Panc1 (cell line): ENCODE measurements at regions of chr1 and their contacts with region 1.

Region 1: DNA sequence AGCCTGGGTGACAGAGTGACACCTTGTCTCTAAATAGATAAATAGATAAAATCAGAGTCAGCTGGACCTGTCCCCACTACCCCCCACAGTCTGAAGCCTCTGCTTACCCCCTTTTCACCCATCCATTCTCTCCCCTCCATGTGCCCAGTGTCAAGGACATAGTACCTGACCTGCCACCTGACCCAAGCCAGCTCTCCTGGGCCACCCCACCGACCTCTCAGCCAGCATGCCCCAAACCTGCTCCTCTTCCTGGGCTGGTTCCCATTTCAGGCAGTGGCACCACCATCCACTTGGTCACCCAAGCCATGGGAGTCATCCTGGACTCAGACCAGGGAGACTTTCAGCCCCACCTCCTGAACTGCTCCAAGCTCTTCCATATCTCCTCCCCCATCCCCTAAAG is 28.2 kb downstream of the CITED4 start:
- DNase-seq: no peak
- ATAC-seq: no peak
- H3K4me3 ChIP-seq: no peak overlapping the region
- H3K27ac ChIP-seq: no peak overlapping the region
- H3K4me1 ChIP-seq: no peaks in the 10 kb centered on the region
- H3K27me3 ChIP-seq: no peaks in the 10 kb centered on the region
- CTCF ChIP-seq: no peak

Region 2: DNA sequence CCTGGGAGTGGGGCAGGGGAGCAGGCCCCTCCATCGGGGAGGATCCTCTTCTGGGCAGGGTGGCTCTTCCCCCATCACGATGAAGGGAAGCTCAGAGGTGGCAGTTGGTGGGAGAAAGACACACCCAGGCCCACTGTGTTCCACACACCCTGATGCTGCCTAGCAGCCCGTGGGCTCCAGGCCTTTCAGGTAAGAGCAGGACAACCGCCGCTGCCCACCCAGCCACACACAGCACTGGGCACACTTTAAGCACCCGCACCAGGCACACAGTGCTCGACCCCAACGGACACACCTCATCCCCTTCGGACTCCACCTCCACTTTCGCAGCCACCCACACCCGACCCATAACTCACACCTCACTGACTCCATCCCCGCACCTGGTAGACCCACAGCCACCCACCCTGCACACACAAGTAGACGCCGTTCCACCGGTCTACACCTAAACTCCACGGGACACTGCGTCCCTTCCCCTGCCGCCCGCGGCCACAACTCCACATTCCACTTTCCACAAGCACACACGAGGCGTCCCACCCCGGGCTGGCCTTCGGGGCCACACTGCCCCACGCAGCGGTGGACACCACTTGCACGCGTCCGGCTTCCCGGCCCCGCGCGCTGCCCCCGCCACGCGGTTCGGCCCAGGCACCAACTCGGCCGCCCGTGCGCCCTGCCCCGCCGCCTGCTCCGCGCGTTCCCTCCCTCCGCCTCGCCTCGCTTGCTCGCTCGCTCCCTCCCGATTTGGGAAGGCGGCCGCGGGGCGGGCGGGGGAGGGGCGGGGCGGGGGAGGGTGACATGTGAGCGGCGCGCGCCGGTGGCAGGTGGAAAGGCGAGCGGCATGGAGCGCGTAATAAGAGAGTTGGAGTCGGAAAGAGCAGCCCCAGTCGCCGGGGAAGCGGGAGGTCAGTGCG is 50.7 kb before region 1 on chr1 and contains the start of gene KCNQ4:
- CTCF ChIA-PET with region 1: no interaction called
- POLR2A ChIA-PET with region 1: no interaction called
- in situ Hi-C with region 1: no loop called
- intact Hi-C with region 1: loop called (anchors 2 kb)
- DNase-seq: no peak
- ATAC-seq: peak; percentile 40
- H3K4me3 ChIP-seq: peak within 1 kb of the TSS; percentile 32 to 45
- H3K27ac ChIP-seq: peak within 1 kb of the TSS; percentile 34; the same call in 1 of the 2 replicates
- H3K4me1 ChIP-seq: peaks cover 23% of the 10 kb centered on the region
- H3K27me3 ChIP-seq: no peaks in the 10 kb centered on the region
- CTCF ChIP-seq: no peak
- total RNA-seq, gene KCNQ4: 2.6 TPM

Region 3: GRCh38 chr1:40794048-40794447 is 39.9 kb before region 1 on chr1:
- CTCF ChIA-PET with region 1: no interaction called
- POLR2A ChIA-PET with region 1: no interaction called
- in situ Hi-C with region 1: no loop called
- intact Hi-C with region 1: no loop called
- DNase-seq: no peak
- ATAC-seq: no peak
- H3K4me3 ChIP-seq: no peak overlapping the region
- H3K27ac ChIP-seq: no peak overlapping the region
- H3K4me1 ChIP-seq: peaks cover 6% of the 10 kb centered on the region
- H3K27me3 ChIP-seq: no peaks in the 10 kb centered on the region
- CTCF ChIP-seq: no peak

Region 4: GRCh38 chr1:40862008-40862863 is 28.3 kb after region 1 on chr1 and contains the start of gene CITED4:
- CTCF ChIA-PET with region 1: no interaction called
- POLR2A ChIA-PET with region 1: no interaction called
- in situ Hi-C with region 1: no loop called
- intact Hi-C with region 1: no loop called
- DNase-seq: peak; percentile 89
- ATAC-seq: peak; percentile 86
- H3K4me3 ChIP-seq: peak within 1 kb of the TSS; percentile 72 to 82
- H3K27ac ChIP-seq: peak within 1 kb of the TSS; percentile 98
- H3K4me1 ChIP-seq: peaks cover 71% of the 10 kb centered on the region
- H3K27me3 ChIP-seq: no peaks in the 10 kb centered on the region
- CTCF ChIP-seq: peak; percentile 79
- total RNA-seq, gene CITED4: 145 TPM

Region 5: DNA sequence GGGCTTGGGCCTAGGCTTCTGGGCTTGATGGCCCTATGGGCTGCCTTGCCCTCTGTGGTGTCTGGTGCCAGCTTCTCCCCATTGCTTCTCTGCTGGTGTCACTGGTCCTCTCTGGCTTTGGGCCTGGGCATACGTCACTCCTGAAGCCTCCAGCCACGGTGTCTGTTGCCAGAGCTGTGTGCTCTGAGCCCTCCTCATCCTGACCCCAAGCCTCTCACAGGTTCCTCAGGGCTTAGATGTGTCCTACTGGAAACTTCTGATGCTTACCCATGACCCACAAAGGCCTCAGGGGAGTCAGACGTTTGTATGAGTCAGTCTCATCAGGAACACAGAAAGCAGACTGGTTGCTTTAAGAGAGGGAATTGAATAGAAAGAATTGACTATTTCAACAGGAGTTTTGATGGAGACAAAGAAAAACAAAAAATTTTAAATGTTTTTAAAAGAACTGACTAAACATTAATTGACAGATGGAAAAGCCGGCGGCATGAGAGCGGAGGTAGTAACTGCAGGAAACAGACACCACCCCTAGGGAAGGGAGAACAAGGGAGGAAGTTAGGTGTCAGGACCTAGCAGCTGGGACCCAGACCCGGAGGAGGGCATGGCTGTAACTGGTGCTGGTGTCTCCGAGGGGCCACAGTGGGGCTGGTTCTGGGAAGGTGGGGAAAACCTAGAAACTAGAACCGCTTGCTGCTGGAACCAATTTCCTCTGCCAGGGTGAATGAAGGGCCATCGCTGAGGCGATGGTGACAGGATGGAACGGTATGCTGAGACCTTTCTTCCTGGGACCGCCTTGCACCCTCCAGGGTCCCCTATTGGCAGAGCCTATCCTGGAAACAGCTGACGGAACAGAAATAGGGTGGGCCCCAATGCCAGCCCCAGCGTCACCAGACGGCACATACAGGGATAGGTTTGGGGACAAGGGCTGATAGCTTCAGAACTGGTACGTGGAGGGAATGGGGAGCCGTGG is 68.2 kb after region 1 on chr1:
- CTCF ChIA-PET with region 1: no interaction called
- POLR2A ChIA-PET with region 1: no interaction called
- in situ Hi-C with region 1: no loop called
- intact Hi-C with region 1: no loop called
- DNase-seq: no peak
- ATAC-seq: peak; percentile 79
- H3K4me3 ChIP-seq: no peak overlapping the region
- H3K27ac ChIP-seq: peak overlapping the region; percentile 74
- H3K4me1 ChIP-seq: peaks cover 38% of the 10 kb centered on the region
- H3K27me3 ChIP-seq: no peaks in the 10 kb centered on the region
- CTCF ChIP-seq: no peak

Region 6: DNA sequence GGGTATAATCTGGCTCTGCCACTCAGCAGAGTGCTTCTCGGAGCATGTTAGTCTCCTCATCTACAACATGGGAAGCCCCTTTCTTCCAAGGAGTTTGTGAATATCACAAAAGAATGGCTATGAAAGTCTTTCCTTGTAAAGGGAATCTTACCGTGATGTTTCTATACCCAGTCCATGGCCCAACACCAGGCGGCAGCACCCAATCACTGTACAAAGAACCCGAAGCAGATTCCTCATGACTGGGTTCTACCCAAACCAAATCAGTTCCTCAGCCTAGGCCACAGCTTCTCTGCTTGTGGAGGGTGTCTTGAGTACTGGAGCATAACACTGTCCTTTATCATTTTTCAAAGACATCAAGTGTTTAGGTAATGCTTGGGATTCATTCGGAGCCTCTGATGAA is 204.1 kb after region 1 on chr1:
- CTCF ChIA-PET with region 1: no interaction called
- POLR2A ChIA-PET with region 1: interaction called, 13 read pairs
- in situ Hi-C with region 1: no loop called
- intact Hi-C with region 1: no loop called
- DNase-seq: no peak
- ATAC-seq: no peak
- H3K4me3 ChIP-seq: no peak overlapping the region
- H3K27ac ChIP-seq: no peak overlapping the region
- H3K4me1 ChIP-seq: no peaks in the 10 kb centered on the region
- H3K27me3 ChIP-seq: no peaks in the 10 kb centered on the region
- CTCF ChIP-seq: peak; percentile 56